ENCODE measurements at regions of chr6 and their contacts with region 1.

Region 1: DNA sequence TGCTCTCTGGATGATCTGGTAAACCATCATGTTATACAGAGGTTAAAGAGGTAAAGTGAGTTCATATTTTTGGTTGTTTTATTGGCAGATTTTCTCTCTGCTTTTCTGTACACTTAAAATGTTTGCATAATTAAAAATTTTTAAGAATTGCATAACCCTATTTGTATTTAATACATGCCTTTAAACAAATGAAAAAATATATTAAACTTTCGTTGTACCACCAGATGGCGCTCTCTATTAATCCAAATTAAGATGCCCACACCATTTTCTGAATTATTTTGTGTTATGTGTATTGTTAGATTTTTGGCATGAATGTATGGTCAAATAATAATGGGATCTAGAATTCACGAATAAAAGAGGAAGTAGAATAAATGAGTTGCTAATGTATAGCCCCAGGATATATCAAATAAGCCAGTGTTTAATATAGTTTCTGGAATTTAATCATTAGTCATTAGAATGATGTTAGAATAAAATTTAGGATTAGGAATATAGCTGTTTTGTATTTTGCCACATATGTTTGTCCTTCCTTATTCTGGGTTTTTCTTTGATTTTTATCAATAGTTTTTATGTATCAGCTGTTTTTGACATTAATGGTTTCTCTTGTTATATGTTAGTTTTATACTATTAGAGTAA is 38.9 kb downstream of the SMAP1 start:
- DNase-seq: no peak
- H3K4me3 ChIP-seq: no peak overlapping the region
- H3K27ac ChIP-seq: no peak overlapping the region
- H3K4me1 ChIP-seq: peaks cover 0 to 49% (median 17%) of the 10 kb centered on the region in 4 donors
- H3K27me3 ChIP-seq: no peaks in the 10 kb centered on the region
- CTCF ChIP-seq: peak; percentile 61 to 71 (median 65)
- EP300 ChIP-seq: no peak
- POLR2A ChIP-seq: no peak

Region 2: GRCh38 chr6:70694371-70694770 is 12.2 kb before region 1 on chr6:
- in situ Hi-C with region 1: no loop called
- intact Hi-C with region 1: loop called (anchors 2 kb)
- DNase-seq: no peak
- H3K4me3 ChIP-seq: no peak overlapping the region
- H3K27ac ChIP-seq: no peak overlapping the region
- H3K4me1 ChIP-seq: no peaks in the 10 kb centered on the region
- H3K27me3 ChIP-seq: no peaks in the 10 kb centered on the region
- CTCF ChIP-seq: no peak
- EP300 ChIP-seq: no peak
- POLR2A ChIP-seq: no peak

Region 3: DNA sequence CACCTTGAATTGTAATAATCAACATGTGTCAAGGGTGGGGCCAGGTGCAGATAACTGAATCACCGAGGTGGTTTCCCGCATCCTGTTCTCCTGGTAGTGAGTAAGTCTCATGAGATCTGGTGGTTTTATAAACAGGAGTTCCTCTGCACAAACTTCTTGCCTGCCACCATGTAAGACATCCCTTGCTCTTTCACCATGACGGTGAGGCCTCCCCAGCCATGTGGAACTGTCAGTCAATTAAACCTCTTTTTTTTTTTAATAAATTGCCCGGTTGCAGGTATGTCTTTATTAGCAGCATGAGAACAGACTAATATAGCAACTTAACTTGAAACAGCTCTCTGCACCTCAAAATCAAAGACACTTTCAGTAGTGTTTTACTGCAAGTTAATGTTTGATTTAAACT is 703.6 kb after region 1 on chr6:
- in situ Hi-C with region 1: no loop called
- intact Hi-C with region 1: no loop called
- DNase-seq: no peak
- H3K4me3 ChIP-seq: no peak overlapping the region
- H3K27ac ChIP-seq: no peak overlapping the region
- H3K4me1 ChIP-seq: peaks cover 0 to 26% (median 5%) of the 10 kb centered on the region in 4 donors
- H3K27me3 ChIP-seq: no peaks in the 10 kb centered on the region
- CTCF ChIP-seq: no peak
- EP300 ChIP-seq: no peak
- POLR2A ChIP-seq: no peak